CD8-positive, alpha-beta T cell (primary cell): ENCODE measurements at regions of chr11 and their contacts with region 1.

Region 1: DNA sequence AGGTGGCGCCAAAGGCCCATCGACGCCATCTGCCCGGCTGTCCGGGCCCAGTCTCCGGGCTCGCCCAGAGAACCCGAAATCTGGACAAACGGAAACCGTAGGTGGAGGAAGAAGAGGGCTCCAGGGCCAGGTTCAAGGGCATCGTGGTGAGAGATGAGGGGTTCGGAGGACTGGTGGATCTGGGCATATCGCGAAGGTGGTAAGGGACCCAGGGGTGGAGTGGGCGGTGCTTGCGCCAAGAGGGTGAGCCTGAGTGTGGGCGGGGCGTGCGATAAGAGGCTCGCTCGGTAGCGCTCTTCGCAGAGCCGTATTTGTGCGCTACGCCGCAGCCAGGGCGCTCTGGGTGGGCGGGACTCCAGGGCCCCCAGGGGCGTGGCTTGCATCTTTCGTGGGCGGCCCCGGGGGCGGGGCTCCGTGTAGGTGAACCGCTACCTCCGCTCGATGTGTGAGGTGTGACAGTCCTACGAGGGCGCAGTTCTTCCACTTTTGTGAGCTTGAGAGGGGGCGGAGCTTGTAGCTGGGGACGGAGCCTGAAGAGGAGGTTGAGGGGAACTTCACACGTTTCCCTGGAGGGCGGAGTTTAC is 4.8 kb downstream of the CD248 start:
- DNase-seq: peak; percentile 94 to 100 (median 99)
- ATAC-seq: peak; percentile 71
- H3K4me3 ChIP-seq: peak overlapping the region; percentile 51 to 79
- H3K4me3 Mint-ChIP-seq: peak overlapping the region; percentile 93
- H3K27ac ChIP-seq: peak overlapping the region; percentile 76 to 98
- H3K27ac Mint-ChIP-seq: peak overlapping the region; percentile 99
- H3K4me1 ChIP-seq: peaks cover 6% of the 10 kb centered on the region
- H3K4me1 Mint-ChIP-seq: peaks cover 20% of the 10 kb centered on the region
- H3K27me3 ChIP-seq: no peaks in the 10 kb centered on the region
- H3K27me3 Mint-ChIP-seq: no peaks in the 10 kb centered on the region
- CTCF ChIP-seq: peak; percentile 98

Region 2: DNA sequence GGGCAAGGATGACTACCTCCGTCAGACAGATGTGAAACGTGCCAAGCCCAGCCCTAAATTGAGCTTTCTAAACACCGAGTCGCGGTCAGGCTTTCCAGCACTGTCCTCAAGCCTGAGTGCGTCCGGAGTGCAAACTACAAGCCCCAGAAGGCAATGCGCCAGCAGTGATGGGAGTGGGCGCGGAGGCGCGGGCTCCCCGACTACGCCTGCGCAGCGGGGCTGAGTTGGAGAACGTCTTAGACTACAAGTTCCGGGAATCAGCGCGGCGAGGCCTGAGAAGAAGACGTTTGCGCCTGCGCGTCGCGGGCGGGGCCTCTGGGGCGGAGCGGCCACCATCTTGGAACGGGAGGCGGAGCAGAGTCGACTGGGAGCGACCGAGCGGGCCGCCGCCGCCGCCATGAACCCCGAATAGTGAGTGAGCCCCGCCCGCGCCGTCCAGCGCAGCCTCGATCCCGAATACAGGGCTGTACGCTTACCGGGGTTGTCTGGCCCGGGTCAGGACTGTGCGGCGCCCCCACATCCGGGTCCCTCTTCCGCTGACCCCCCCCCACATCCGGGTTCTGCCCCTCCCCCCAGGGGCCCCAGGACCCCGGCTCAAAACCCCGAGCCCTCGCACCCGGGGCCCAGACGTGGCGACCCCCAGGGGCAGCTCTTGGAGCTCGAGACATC is 43.6 kb before region 1 on chr11 and contains the start of gene RAB1B:
- CTCF ChIA-PET with region 1: no interaction called
- POLR2A ChIA-PET with region 1: interaction called, 7 read pairs
- intact Hi-C with region 1: loop called (anchors 1 kb)
- DNase-seq: peak; percentile 99 to 100 (median 100)
- ATAC-seq: peak; percentile 75
- H3K4me3 ChIP-seq: peak within 1 kb of the TSS; percentile 89 to 97
- H3K4me3 Mint-ChIP-seq: peak within 1 kb of the TSS; percentile 97
- H3K27ac ChIP-seq: peak within 1 kb of the TSS; percentile 83 to 91
- H3K27ac Mint-ChIP-seq: peak within 1 kb of the TSS; percentile 97
- H3K4me1 ChIP-seq: peaks cover 43% of the 10 kb centered on the region
- H3K4me1 Mint-ChIP-seq: peaks cover 50% of the 10 kb centered on the region
- H3K27me3 ChIP-seq: no peaks in the 10 kb centered on the region
- H3K27me3 Mint-ChIP-seq: no peaks in the 10 kb centered on the region
- CTCF ChIP-seq: no peak
- total RNA-seq, gene RAB1B: 34.4 to 36.3 TPM

Region 3: GRCh38 chr11:66328307-66329144 is 16.5 kb after region 1 on chr11:
- CTCF ChIA-PET with region 1: interaction called, 140 read pairs
- POLR2A ChIA-PET with region 1: interaction called, 27 read pairs
- intact Hi-C with region 1: loop called (anchors 1 kb)
- DNase-seq: peak; percentile 65 to 92 (median 81)
- ATAC-seq: peak; percentile 83
- H3K4me3 ChIP-seq: peak overlapping the region; percentile 12
- H3K4me3 Mint-ChIP-seq: peak overlapping the region; percentile 67
- H3K27ac ChIP-seq: peak overlapping the region in 1 of 2 experiments; percentile 57
- H3K27ac Mint-ChIP-seq: peak overlapping the region; percentile 89
- H3K4me1 ChIP-seq: peaks cover 45% of the 10 kb centered on the region
- H3K4me1 Mint-ChIP-seq: peaks cover 39% of the 10 kb centered on the region
- H3K27me3 ChIP-seq: no peaks in the 10 kb centered on the region
- H3K27me3 Mint-ChIP-seq: no peaks in the 10 kb centered on the region
- CTCF ChIP-seq: peak; percentile 92

Region 4: DNA sequence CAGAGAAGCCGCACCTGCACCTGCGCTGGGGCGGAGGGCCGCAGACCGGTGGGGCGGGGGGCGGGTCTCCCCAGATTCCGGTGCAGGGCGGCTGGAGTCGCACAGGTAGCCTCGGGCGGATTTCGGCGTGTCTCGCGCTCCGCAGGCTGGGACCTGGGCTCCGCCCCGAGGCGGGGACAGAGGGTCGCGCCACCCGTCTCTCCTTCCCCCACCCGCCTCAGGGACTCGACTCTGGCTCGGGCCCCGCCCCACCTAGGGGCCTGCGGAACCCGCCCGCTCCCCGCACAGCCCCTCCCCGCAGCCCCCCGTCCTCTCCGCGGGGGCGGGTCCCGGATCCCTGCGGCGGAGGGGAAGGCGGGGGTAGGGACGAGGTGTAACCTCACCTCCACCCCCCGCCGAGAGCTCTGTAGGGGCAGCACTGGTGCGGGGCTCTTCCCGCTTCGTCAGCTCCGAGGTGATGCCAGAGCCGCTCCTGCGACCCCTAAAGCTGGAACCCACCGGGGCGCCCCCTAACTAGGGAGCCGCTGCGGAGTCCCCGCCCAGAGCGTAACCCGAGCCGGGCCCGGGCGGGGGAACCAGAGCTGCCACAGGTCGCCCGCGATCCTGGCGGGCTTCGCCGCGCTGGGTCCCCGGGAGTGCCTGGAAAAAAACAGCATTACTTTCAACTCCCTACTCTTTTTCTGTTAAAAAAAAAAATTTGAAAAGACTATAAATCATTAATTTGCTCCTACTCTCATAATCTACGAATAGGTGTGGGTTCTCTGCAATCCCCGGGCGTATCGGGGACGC is 59.8 kb after region 1 on chr11 and contains the start of gene SLC29A2:
- CTCF ChIA-PET with region 1: interaction called, 7 read pairs
- POLR2A ChIA-PET with region 1: interaction called, 14 read pairs
- intact Hi-C with region 1: loop called (anchors 1 kb)
- DNase-seq: peak; percentile 49 to 89 (median 80)
- ATAC-seq: peak; percentile 86
- H3K4me3 ChIP-seq: peak within 1 kb of the TSS; percentile 71 to 77
- H3K4me3 Mint-ChIP-seq: peak within 1 kb of the TSS; percentile 87
- H3K27ac ChIP-seq: peak within 1 kb of the TSS; percentile 63 to 68
- H3K27ac Mint-ChIP-seq: peak within 1 kb of the TSS; percentile 88
- H3K4me1 ChIP-seq: peaks cover 10% of the 10 kb centered on the region
- H3K4me1 Mint-ChIP-seq: peaks cover 12% of the 10 kb centered on the region
- H3K27me3 ChIP-seq: no peaks in the 10 kb centered on the region
- H3K27me3 Mint-ChIP-seq: no peaks in the 10 kb centered on the region
- CTCF ChIP-seq: no peak
- total RNA-seq, gene SLC29A2: 5.6 to 6.0 TPM

Region 5: GRCh38 chr11:66466225-66467027 is 154.4 kb after region 1 on chr11 and contains the start of gene PELI3:
- CTCF ChIA-PET with region 1: no interaction called
- POLR2A ChIA-PET with region 1: no interaction called
- intact Hi-C with region 1: loop called in 1 of 2 experiments (anchors 1 kb)
- DNase-seq: peak; percentile 92 to 97 (median 95)
- ATAC-seq: peak; percentile 92
- H3K4me3 ChIP-seq: peak within 1 kb of the TSS; percentile 59 to 92
- H3K4me3 Mint-ChIP-seq: peak within 1 kb of the TSS; percentile 91
- H3K27ac ChIP-seq: peak within 1 kb of the TSS; percentile 56 to 74
- H3K27ac Mint-ChIP-seq: peak within 1 kb of the TSS; percentile 91
- H3K4me1 ChIP-seq: peaks cover 20% of the 10 kb centered on the region
- H3K4me1 Mint-ChIP-seq: peaks cover 22% of the 10 kb centered on the region
- H3K27me3 ChIP-seq: no peaks in the 10 kb centered on the region
- H3K27me3 Mint-ChIP-seq: no peaks in the 10 kb centered on the region
- CTCF ChIP-seq: no peak
- total RNA-seq, gene PELI3: 12.6 to 16.8 TPM

Region 6: GRCh38 chr11:66891851-66892660 is 580.0 kb after region 1 on chr11:
- CTCF ChIA-PET with region 1: no interaction called
- POLR2A ChIA-PET with region 1: no interaction called
- intact Hi-C with region 1: no loop called
- DNase-seq: no peak
- ATAC-seq: no peak
- H3K4me3 ChIP-seq: no peak overlapping the region
- H3K4me3 Mint-ChIP-seq: no peak overlapping the region
- H3K27ac ChIP-seq: no peak overlapping the region
- H3K27ac Mint-ChIP-seq: no peak overlapping the region
- H3K4me1 ChIP-seq: no peaks in the 10 kb centered on the region
- H3K4me1 Mint-ChIP-seq: no peaks in the 10 kb centered on the region
- H3K27me3 ChIP-seq: no peaks in the 10 kb centered on the region
- H3K27me3 Mint-ChIP-seq: no peaks in the 10 kb centered on the region
- CTCF ChIP-seq: no peak

Region 7: GRCh38 chr11:67468835-67469811 is 1157.1 kb after region 1 on chr11 and contains the start of gene TMEM134:
- CTCF ChIA-PET with region 1: no interaction called
- POLR2A ChIA-PET with region 1: no interaction called
- intact Hi-C with region 1: loop called in 1 of 2 experiments (anchors 10 kb)
- DNase-seq: peak; percentile 86 to 97 (median 91)
- ATAC-seq: peak; percentile 81
- H3K4me3 ChIP-seq: peak within 1 kb of the TSS; percentile 80 to 89
- H3K4me3 Mint-ChIP-seq: peak within 1 kb of the TSS; percentile 89
- H3K27ac ChIP-seq: peak within 1 kb of the TSS; percentile 78 to 82
- H3K27ac Mint-ChIP-seq: peak within 1 kb of the TSS; percentile 93
- H3K4me1 ChIP-seq: peaks cover 39% of the 10 kb centered on the region
- H3K4me1 Mint-ChIP-seq: peaks cover 37% of the 10 kb centered on the region
- H3K27me3 ChIP-seq: no peaks in the 10 kb centered on the region
- H3K27me3 Mint-ChIP-seq: no peaks in the 10 kb centered on the region
- CTCF ChIP-seq: peak; percentile 43
- total RNA-seq, gene TMEM134: 41.2 to 48.5 TPM